ENCODE measurements at regions of chr2 and their contacts with region 1.

Region 1: DNA sequence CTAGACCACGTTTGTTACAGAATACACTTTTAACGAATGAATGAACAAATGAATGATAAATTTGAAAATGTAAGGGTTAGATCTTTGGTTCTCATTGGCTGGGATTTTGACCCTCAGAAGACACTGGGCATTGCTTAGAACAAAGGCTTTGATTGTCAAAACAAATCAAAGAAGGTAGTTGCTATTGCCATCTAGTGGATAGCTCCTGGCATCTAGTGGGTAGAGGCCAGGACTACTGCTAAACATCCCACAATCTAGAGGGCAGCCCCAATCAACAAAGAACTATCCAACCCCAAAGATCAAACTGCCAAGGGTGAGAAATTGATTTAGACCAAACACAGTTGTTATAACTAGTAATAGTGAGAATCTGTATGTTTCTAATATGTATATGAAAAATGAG is 552.3 kb downstream of the KCNJ3 start:
- DNase-seq: peak; percentile 27
- H3K4me3 Mint-ChIP-seq: no peak overlapping the region
- H3K27ac Mint-ChIP-seq: no peak overlapping the region
- H3K4me1 Mint-ChIP-seq: no peaks in the 10 kb centered on the region
- H3K27me3 Mint-ChIP-seq: no peaks in the 10 kb centered on the region
- CTCF ChIP-seq: peak; percentile 38

Region 2: GRCh38 chr2:154402218-154402617 is 848.6 kb before region 1 on chr2:
- CTCF ChIA-PET with region 1: no interaction called
- intact Hi-C with region 1: loop called (anchors 1 kb)
- DNase-seq: no peak
- H3K4me3 Mint-ChIP-seq: no peak overlapping the region
- H3K27ac Mint-ChIP-seq: no peak overlapping the region
- H3K4me1 Mint-ChIP-seq: no peaks in the 10 kb centered on the region
- H3K27me3 Mint-ChIP-seq: no peaks in the 10 kb centered on the region
- CTCF ChIP-seq: peak; percentile 53

Region 3: DNA sequence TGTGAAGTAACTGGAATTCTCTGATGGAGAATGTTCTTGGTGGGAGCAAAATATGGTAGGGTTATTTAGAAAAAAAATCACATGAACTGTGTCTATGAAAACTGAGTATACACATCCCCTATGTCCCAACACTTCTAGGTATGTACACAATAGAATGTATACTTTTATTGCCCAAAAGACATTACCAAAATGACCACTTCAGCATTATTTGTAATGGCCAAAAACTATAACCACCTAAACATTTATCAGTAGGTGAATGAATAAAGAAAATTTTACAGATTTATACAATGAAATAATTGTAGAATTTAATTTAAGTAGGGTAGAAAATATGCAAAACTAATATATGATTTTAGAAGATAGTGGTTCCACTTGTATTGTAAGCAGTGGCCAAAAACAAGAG is 89.5 kb before region 1 on chr2:
- CTCF ChIA-PET with region 1: no interaction called
- intact Hi-C with region 1: no loop called
- DNase-seq: no peak
- H3K4me3 Mint-ChIP-seq: no peak overlapping the region
- H3K27ac Mint-ChIP-seq: no peak overlapping the region
- H3K4me1 Mint-ChIP-seq: no peaks in the 10 kb centered on the region
- H3K27me3 Mint-ChIP-seq: no peaks in the 10 kb centered on the region
- CTCF ChIP-seq: no peak

Measured in Calu3 (cell line).